ENCODE measurements at regions of chr6 and their contacts with region 1.

Region 1: DNA sequence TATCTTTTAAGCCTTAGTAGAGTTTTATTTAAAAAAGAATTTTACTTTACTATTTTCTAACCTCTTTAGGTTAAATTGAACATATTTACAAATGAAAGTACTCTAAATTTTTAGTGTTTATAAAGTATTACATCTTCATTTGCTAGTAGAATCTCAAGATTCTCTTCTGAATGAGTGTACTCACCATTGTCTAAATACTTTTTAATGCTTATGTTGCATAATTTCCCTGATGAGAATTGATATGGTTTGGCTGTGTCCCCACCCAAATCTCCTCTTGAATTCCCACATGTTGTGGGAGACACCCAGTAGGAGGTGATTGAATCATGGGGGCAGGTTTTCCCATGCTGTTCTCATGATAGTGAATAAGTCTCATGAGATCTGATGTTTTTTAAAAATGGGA is 53.6 kb downstream of the VIP start:
- DNase-seq: no peak
- ATAC-seq: no peak
- H3K4me3 ChIP-seq: no peak overlapping the region
- H3K27ac ChIP-seq: no peak overlapping the region
- H3K4me1 ChIP-seq: no peaks in the 10 kb centered on the region
- H3K27me3 ChIP-seq: no peaks in the 10 kb centered on the region
- CTCF ChIP-seq: no peak
- POLR2A ChIP-seq: no peak

Region 2: GRCh38 chr6:152821525-152821924 is 17.4 kb after region 1 on chr6:
- intact Hi-C with region 1: loop called in 1 of 10 experiments (anchors 2 kb)
- DNase-seq: no peak
- ATAC-seq: no peak
- H3K4me3 ChIP-seq: no peak overlapping the region
- H3K27ac ChIP-seq: no peak overlapping the region
- H3K4me1 ChIP-seq: no peaks in the 10 kb centered on the region
- H3K27me3 ChIP-seq: peaks cover 0 to 6% (median 0%) of the 10 kb centered on the region in 9 donors
- CTCF ChIP-seq: no peak
- POLR2A ChIP-seq: no peak